CD4-positive, alpha-beta T cell (primary cell): ENCODE measurements at regions of chr7 and their contacts with region 1.

Region 1: GRCh38 chr7:155003376-155004214 is 671 bp upstream of the PAXIP1 start:
- DNase-seq: peak; percentile 71 to 92 (median 85)
- ATAC-seq: peak; percentile 86
- H3K4me3 ChIP-seq: peak overlapping the region; percentile 85
- H3K4me3 Mint-ChIP-seq: peak overlapping the region; percentile 97
- H3K27ac ChIP-seq: peak overlapping the region; percentile 40 to 52
- H3K27ac Mint-ChIP-seq: peak overlapping the region; percentile 88
- H3K4me1 ChIP-seq: peaks cover 16% of the 10 kb centered on the region
- H3K4me1 Mint-ChIP-seq: peaks cover 23% of the 10 kb centered on the region
- H3K27me3 ChIP-seq: no peaks in the 10 kb centered on the region
- H3K27me3 Mint-ChIP-seq: no peaks in the 10 kb centered on the region
- CTCF ChIP-seq: no peak

Region 2: DNA sequence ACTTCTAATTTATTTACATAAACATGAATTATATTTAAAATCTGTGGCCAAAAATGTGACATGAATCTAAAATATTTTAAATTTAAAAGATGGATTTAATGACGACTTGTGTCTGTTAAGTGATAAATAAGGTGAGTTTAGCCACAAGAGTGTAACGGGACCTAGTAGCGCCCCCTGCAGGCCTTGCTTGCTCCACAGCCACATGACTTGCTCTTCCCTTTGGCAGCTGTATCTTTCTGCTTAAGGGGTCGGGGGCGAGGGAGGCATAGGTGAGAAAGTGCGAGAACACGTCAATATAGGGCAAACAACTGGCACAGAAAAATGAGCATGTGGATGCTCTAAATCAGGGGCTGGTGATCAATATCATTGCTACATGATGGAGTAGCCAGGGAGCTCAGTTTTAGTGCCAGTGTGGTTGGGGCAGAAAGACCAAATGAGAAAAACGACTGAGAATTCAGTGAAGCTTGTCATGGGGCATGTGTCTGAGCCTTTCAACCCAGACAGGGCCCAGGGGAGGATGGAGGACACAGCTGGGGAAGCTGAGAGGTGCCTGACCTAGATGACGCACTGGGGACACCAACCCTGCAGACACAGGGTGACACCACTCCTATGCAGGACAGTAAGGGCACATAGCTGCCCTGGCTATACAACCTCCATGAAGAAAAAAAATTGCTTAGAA is 50.5 kb before region 1 on chr7:
- CTCF ChIA-PET with region 1: no interaction called
- POLR2A ChIA-PET with region 1: interaction called, 3 read pairs
- intact Hi-C with region 1: loop called (anchors 5 to 10 kb)
- DNase-seq: peak; percentile 58 to 83 (median 65)
- ATAC-seq: peak; percentile 62
- H3K4me3 ChIP-seq: no peak overlapping the region
- H3K4me3 Mint-ChIP-seq: no peak overlapping the region
- H3K27ac ChIP-seq: no peak overlapping the region
- H3K27ac Mint-ChIP-seq: no peak overlapping the region
- H3K4me1 ChIP-seq: no peaks in the 10 kb centered on the region
- H3K4me1 Mint-ChIP-seq: no peaks in the 10 kb centered on the region
- H3K27me3 ChIP-seq: no peaks in the 10 kb centered on the region
- H3K27me3 Mint-ChIP-seq: no peaks in the 10 kb centered on the region
- CTCF ChIP-seq: peak; percentile 67

Region 3: DNA sequence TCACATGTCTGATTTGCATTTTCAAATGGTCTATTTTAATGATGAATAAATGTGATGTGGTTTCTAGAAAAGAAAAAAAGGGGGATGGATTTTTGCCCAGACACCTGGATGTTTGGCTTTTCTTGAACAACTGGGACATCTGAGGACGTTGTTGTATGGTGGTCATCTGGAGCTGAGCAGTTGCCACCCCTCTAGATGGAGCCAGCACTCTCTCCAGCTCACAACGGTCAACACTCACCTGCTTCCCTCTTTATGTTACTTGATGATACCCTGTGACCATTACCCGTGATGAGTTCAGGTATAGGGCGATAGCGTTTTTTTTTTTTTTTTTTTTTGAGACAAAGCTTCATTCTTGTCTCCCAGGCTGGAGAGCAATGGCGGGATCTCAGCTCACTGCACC is 29.4 kb after region 1 on chr7:
- CTCF ChIA-PET with region 1: no interaction called
- POLR2A ChIA-PET with region 1: no interaction called
- intact Hi-C with region 1: no loop called
- DNase-seq: no peak
- ATAC-seq: no peak
- H3K4me3 ChIP-seq: no peak overlapping the region
- H3K4me3 Mint-ChIP-seq: no peak overlapping the region
- H3K27ac ChIP-seq: no peak overlapping the region
- H3K27ac Mint-ChIP-seq: no peak overlapping the region
- H3K4me1 ChIP-seq: no peaks in the 10 kb centered on the region
- H3K4me1 Mint-ChIP-seq: no peaks in the 10 kb centered on the region
- H3K27me3 ChIP-seq: no peaks in the 10 kb centered on the region
- H3K27me3 Mint-ChIP-seq: peaks cover 21% of the 10 kb centered on the region
- CTCF ChIP-seq: no peak

Region 4: DNA sequence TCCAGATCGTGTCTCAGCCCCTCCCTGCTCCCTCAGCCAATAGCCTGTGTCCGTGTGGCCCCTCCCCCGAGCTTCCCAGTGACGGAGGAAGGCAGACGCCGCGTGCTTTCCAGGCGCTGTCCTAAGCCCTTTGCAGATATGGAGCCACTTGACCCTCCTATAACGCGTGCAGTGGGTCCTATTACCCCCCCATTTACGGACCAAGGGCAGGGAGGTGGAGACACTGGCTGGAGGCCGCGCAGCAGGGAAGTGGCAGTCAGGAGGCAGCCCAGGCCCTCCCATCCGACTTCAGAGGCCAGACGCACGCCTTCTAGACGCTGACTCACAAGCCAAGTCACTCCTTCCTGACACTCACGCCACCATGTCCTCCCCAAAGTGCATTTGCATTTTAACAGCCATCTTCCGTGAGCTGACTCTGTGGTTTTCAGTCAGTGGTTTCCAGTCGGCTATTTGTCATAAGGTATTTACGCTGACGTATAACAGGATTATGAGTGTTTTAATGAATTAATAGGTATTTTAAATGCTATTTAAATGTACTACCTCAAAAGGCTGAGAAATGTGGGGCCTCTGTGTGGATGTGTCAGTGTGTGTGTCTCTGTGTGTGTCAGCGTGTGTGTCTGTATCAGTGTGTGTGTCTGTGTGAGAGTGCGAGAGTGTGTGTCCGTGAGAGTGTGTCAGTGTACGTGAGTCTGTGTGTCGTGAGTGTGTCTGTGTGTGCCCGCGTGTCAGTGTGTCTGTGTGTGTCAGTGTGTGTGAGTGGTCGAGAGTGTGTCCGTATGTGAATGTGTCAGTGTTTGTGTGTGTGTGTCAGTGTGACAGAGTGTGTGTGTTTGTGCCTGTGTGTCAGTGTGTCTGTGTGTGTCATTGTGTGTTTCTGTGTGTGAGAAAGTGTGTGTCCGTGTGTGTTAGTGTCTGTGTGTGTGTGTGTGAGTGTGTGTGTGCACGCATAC is 202.0 kb after region 1 on chr7:
- CTCF ChIA-PET with region 1: no interaction called
- POLR2A ChIA-PET with region 1: interaction called, 5 read pairs
- intact Hi-C with region 1: loop called in 1 of 2 experiments (anchors 5 kb)
- DNase-seq: peak; percentile 67 to 98 (median 81)
- ATAC-seq: peak; percentile 91
- H3K4me3 ChIP-seq: peak overlapping the region; percentile 69
- H3K4me3 Mint-ChIP-seq: peak overlapping the region; percentile 91
- H3K27ac ChIP-seq: peak overlapping the region; percentile 67 to 93
- H3K27ac Mint-ChIP-seq: peak overlapping the region; percentile 93
- H3K4me1 ChIP-seq: peaks cover 29% of the 10 kb centered on the region
- H3K4me1 Mint-ChIP-seq: peaks cover 22% of the 10 kb centered on the region
- H3K27me3 ChIP-seq: no peaks in the 10 kb centered on the region
- H3K27me3 Mint-ChIP-seq: no peaks in the 10 kb centered on the region
- CTCF ChIP-seq: no peak

Region 5: GRCh38 chr7:155371884-155372781 is 368.5 kb after region 1 on chr7:
- CTCF ChIA-PET with region 1: no interaction called
- POLR2A ChIA-PET with region 1: no interaction called
- intact Hi-C with region 1: no loop called
- DNase-seq: peak in 2 of 14 experiments; percentile 35 to 42
- ATAC-seq: no peak
- H3K4me3 ChIP-seq: no peak overlapping the region
- H3K4me3 Mint-ChIP-seq: no peak overlapping the region
- H3K27ac ChIP-seq: no peak overlapping the region
- H3K27ac Mint-ChIP-seq: no peak overlapping the region
- H3K4me1 ChIP-seq: peaks cover 42% of the 10 kb centered on the region
- H3K4me1 Mint-ChIP-seq: peaks cover 33% of the 10 kb centered on the region
- H3K27me3 ChIP-seq: peaks cover 51 to 70% of the 10 kb centered on the region in 2 experiments
- H3K27me3 Mint-ChIP-seq: peaks cover 76% of the 10 kb centered on the region
- CTCF ChIP-seq: no peak